CD4-positive, alpha-beta T cell (primary cell): ENCODE measurements at regions of chrX and their contacts with region 1.

Region 1: DNA sequence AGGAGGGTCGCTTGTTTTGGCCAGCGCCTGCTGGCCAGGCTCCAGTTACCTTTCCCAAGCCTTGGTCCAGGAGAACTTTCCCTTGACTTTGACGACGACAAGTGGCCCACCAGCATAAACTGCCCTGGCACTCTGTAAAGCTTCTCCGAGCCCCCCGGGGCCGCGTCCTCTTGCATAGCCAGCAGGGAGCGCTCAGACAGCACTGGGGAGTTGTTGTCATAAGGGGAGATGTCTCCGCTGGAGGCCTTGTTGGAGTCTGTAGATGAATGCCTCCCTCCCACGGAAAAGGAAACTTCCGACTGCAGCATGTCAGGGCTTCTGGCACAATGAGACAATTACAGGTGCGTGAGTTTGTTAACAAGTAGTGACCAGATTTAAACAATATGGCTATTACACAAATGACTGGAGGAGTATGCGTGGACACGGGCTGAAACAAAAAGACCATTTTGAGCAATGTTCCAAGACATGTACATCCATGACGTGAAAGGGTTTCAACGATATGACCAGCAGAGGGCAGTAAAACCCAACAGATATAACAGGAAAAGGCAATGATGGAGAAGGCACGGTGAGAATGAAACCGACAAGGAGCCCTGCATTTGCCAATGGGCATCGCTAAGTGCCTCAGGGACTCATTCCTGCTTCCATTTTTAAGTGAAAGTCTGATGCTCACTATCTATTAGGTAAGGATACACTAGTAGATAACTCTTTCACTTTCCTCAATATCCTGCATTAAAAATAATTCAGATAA is 33.0 kb downstream of the HCCS start:
- DNase-seq: peak in 12 of 14 experiments; percentile 2 to 77 (median 23)
- ATAC-seq: peak; percentile 68
- H3K4me3 ChIP-seq: no peak overlapping the region
- H3K4me3 Mint-ChIP-seq: no peak overlapping the region
- H3K27ac ChIP-seq: no peak overlapping the region
- H3K27ac Mint-ChIP-seq: no peak overlapping the region
- H3K4me1 ChIP-seq: no peaks in the 10 kb centered on the region
- H3K4me1 Mint-ChIP-seq: no peaks in the 10 kb centered on the region
- H3K27me3 ChIP-seq: no peaks in the 10 kb centered on the region
- H3K27me3 Mint-ChIP-seq: peaks cover 13% of the 10 kb centered on the region
- CTCF ChIP-seq: peak; percentile 58

Region 2: DNA sequence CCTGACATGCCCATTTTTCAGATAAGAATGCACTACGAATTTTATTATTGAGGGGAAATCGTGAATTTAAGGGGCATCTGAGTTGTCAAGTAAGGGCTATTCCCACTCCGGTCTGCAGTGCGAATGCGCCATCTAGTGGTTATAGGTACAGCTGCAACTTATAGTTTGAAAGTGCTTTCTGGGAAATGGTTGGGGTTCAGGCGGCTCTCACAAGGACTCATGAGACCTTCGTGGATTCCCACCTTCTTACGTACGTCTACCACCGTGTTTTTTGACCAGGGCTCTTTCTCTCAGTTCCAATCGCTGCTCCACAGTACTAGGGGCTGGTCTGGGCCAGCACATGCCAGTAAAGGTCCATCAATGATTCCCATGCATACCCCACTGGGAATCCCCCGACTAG is 626.2 kb after region 1 on chrX:
- CTCF ChIA-PET with region 1: no interaction called
- POLR2A ChIA-PET with region 1: no interaction called
- intact Hi-C with region 1: loop called in 1 of 2 experiments (anchors 5 kb)
- DNase-seq: peak in 11 of 14 experiments; percentile 27 to 83 (median 46)
- ATAC-seq: peak; percentile 60
- H3K4me3 ChIP-seq: no peak overlapping the region
- H3K4me3 Mint-ChIP-seq: no peak overlapping the region
- H3K27ac ChIP-seq: peak overlapping the region in 1 of 2 donors; percentile 16
- H3K27ac Mint-ChIP-seq: peak overlapping the region; percentile 79
- H3K4me1 ChIP-seq: peaks cover 26% of the 10 kb centered on the region
- H3K4me1 Mint-ChIP-seq: peaks cover 40% of the 10 kb centered on the region
- H3K27me3 ChIP-seq: no peaks in the 10 kb centered on the region
- H3K27me3 Mint-ChIP-seq: no peaks in the 10 kb centered on the region
- CTCF ChIP-seq: peak; percentile 70

Region 3: GRCh38 chrX:12771445-12772069 is 1627.5 kb after region 1 on chrX:
- CTCF ChIA-PET with region 1: no interaction called
- POLR2A ChIA-PET with region 1: no interaction called
- intact Hi-C with region 1: loop called in 1 of 2 experiments (anchors 5 kb)
- DNase-seq: peak; percentile 51 to 89 (median 66)
- ATAC-seq: peak; percentile 100
- H3K4me3 ChIP-seq: no peak overlapping the region
- H3K4me3 Mint-ChIP-seq: peak overlapping the region; percentile 48
- H3K27ac ChIP-seq: no peak overlapping the region
- H3K27ac Mint-ChIP-seq: no peak overlapping the region
- H3K4me1 ChIP-seq: peaks cover 6% of the 10 kb centered on the region
- H3K4me1 Mint-ChIP-seq: peaks cover 13% of the 10 kb centered on the region
- H3K27me3 ChIP-seq: peaks cover 0 to 3% of the 10 kb centered on the region in 2 experiments
- H3K27me3 Mint-ChIP-seq: peaks cover 4% of the 10 kb centered on the region
- CTCF ChIP-seq: peak; percentile 61